ENCODE measurements at regions of chr11 and their contacts with region 1.

Region 1: DNA sequence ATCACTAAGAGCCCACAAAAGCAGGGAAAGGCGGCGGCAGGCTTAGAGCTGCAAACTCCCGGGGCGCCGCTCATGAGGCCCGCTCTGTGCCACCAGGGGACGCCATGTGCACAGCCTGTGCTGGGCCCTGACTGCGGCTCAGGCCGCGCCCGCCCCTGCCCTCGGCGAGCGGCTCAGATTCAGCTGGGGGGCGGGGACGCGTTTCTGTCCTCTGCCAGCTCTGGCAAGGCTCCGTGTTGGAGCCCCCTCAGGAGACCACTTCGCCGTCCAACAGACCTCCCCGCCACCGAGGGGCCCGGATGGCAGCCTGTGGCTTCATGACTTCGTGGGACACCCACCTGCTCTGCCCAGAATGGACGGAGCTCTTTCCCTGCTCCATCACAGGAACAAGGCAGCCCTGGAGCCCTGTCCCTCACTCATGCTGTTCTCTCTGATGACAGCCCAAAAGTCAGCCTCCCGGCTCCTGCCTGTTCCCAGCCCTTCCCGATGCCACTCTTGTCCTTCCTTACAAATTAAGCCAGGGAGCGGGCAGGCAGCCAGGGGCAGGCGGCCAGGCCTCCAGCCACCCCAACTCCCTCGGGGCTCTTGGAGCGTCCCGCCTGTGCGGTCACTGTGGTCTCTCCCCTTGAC is 69.1 kb downstream of the NAT10 start:
- DNase-seq: peak; percentile 91
- ATAC-seq: peak; percentile 100
- H3K4me3 Mint-ChIP-seq: peak overlapping the region; percentile 15
- H3K27ac Mint-ChIP-seq: no peak overlapping the region
- H3K4me1 Mint-ChIP-seq: peaks cover 17% of the 10 kb centered on the region
- H3K27me3 Mint-ChIP-seq: peaks cover 4% of the 10 kb centered on the region
- CTCF ChIP-seq: peak; percentile 91

Region 2: GRCh38 chr11:34091825-34092224 is 82.7 kb before region 1 on chr11:
- CTCF ChIA-PET with region 1: no interaction called
- POLR2A ChIA-PET with region 1: no interaction called
- intact Hi-C with region 1: no loop called
- DNase-seq: no peak
- ATAC-seq: no peak
- H3K4me3 Mint-ChIP-seq: no peak overlapping the region
- H3K27ac Mint-ChIP-seq: no peak overlapping the region
- H3K4me1 Mint-ChIP-seq: peaks cover 5% of the 10 kb centered on the region
- H3K27me3 Mint-ChIP-seq: no peaks in the 10 kb centered on the region
- CTCF ChIP-seq: no peak

Region 3: GRCh38 chr11:34209809-34210208 is 35.3 kb after region 1 on chr11:
- CTCF ChIA-PET with region 1: interaction called, 12 read pairs
- POLR2A ChIA-PET with region 1: no interaction called
- intact Hi-C with region 1: no loop called
- DNase-seq: no peak
- ATAC-seq: no peak
- H3K4me3 Mint-ChIP-seq: no peak overlapping the region
- H3K27ac Mint-ChIP-seq: no peak overlapping the region
- H3K4me1 Mint-ChIP-seq: peaks cover 37% of the 10 kb centered on the region
- H3K27me3 Mint-ChIP-seq: no peaks in the 10 kb centered on the region
- CTCF ChIP-seq: no peak

Region 4: DNA sequence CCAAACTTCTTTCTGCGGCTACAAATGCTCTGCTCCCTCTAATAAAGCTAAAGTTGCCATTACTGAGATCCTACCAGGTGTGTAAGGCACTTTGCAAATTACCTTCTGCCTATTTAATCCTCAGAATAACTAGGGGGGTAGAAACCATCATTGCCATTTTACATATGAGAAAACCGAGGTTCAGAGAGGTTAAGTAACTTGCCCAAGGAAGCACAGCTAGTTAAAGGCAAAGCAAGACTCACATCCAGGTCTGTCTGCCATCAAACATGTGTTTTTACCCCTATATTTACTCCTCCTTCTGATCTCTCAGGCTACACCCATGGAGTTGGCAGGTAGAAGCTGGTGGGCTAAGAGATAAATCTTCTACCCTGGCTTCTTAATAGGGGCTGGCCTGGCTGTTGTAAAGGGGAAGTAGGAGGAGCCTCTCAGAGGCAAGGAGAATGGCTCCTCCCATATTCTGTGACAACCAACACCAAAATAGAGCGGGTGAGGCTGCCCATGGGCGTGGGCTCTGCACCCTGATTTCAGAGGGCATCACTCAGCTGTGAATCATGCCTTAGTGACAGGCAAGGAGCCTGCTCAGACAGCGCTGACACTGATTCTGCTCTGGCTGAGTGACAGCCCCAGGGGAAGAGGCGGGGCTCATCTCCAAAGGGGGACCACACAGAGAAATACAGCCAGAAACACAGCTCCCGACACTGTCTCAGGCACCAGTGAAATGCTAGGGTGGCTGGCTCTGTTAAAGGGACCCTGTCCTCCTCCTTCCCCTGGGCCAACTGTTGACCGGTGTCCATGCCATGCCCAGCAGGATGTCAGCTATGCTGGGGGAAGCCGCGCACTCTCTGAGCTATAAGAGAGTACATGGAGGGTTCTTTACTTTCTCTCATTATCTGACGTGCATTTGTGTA is 76.5 kb after region 1 on chr11:
- CTCF ChIA-PET with region 1: interaction called, 50 read pairs
- POLR2A ChIA-PET with region 1: interaction called, 3 read pairs
- intact Hi-C with region 1: no loop called
- DNase-seq: peak; percentile 91
- ATAC-seq: peak; percentile 97
- H3K4me3 Mint-ChIP-seq: peak overlapping the region; percentile 45
- H3K27ac Mint-ChIP-seq: peak overlapping the region; percentile 1
- H3K4me1 Mint-ChIP-seq: peaks cover 54% of the 10 kb centered on the region
- H3K27me3 Mint-ChIP-seq: peaks cover 7% of the 10 kb centered on the region
- CTCF ChIP-seq: no peak

Region 5: GRCh38 chr11:34357701-34358257 is 183.3 kb after region 1 on chr11 and contains the start of gene ABTB2:
- CTCF ChIA-PET with region 1: interaction called, 85 read pairs
- POLR2A ChIA-PET with region 1: interaction called, 11 read pairs
- intact Hi-C with region 1: loop called (anchors 1 kb)
- DNase-seq: peak; percentile 99
- ATAC-seq: peak; percentile 92
- H3K4me3 Mint-ChIP-seq: peak within 1 kb of the TSS; percentile 76
- H3K27ac Mint-ChIP-seq: peak within 1 kb of the TSS; percentile 77
- H3K4me1 Mint-ChIP-seq: peaks cover 28% of the 10 kb centered on the region
- H3K27me3 Mint-ChIP-seq: peaks cover 35% of the 10 kb centered on the region
- CTCF ChIP-seq: no peak
- total RNA-seq, gene ABTB2: 2.4 to 2.5 TPM

Region 6: GRCh38 chr11:34416088-34416487 is 241.6 kb after region 1 on chr11:
- CTCF ChIA-PET with region 1: no interaction called
- POLR2A ChIA-PET with region 1: no interaction called
- intact Hi-C with region 1: no loop called
- DNase-seq: no peak
- ATAC-seq: no peak
- H3K4me3 Mint-ChIP-seq: no peak overlapping the region
- H3K27ac Mint-ChIP-seq: no peak overlapping the region
- H3K4me1 Mint-ChIP-seq: no peaks in the 10 kb centered on the region
- H3K27me3 Mint-ChIP-seq: peaks cover 13% of the 10 kb centered on the region
- CTCF ChIP-seq: no peak

Region 7: DNA sequence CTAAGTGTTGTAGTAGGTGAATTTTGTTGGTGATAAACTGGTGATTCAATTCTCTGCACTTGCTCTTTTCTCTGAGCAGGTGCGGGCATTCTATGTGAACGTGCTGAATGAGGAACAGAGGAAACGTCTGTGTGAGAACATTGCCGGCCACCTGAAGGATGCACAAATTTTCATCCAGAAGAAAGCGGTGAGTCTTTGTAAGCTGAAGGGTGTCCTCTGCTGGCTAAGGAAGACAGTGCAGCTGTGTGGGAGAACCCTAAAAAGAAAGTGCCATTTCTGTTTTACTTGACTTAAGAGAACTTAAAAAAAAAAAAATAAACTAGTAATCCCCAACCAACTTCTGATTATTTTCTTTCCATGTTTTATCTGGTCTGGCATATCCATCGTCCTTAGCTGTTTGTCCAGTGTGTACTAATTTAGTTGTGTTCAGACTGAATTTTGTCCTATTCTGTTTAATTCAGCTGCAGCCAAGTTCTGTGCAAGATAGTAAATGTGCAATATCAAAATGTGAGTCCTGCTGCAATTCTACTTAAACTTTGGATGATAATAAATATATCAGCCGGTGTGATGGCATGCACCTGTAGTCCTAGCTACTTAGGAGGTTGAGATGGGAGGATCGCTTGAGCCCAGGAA is 293.8 kb after region 1 on chr11:
- CTCF ChIA-PET with region 1: interaction called, 15 read pairs
- POLR2A ChIA-PET with region 1: no interaction called
- intact Hi-C with region 1: loop called (anchors 10 kb)
- DNase-seq: peak; percentile 76
- ATAC-seq: peak; percentile 84
- H3K4me3 Mint-ChIP-seq: no peak overlapping the region
- H3K27ac Mint-ChIP-seq: no peak overlapping the region
- H3K4me1 Mint-ChIP-seq: peaks cover 4% of the 10 kb centered on the region
- H3K27me3 Mint-ChIP-seq: no peaks in the 10 kb centered on the region
- CTCF ChIP-seq: peak; percentile 85